ENCODE measurements at regions of chr9 and their contacts with region 1.

Region 1: DNA sequence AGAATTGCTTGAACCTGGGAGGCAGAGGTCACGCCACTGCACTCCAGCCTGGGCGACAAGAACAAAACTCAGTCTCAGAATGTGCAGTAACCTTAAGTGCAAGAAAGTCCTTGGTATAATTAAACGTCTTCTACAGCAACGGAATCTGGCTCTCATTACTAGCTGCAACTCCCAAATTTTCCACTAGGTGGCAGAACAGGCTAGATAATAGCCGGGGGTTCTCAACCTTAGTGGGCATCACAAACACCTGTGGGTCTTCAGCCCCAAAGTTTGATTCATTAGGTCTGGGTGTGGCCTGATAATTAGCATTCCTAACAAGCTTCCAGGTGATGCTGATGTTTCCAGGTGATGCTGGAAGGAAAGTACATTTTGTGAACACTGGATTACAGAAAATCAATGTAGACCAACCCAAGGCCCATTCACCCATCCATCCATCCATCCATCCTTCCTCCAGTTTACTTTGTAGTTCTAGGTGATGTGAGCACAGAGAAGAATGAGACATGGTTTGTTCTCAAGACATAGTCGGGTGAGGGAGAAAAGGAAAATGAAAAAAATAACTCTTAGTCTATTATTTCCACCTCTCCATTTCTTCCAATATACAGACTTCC is 37.3 kb downstream of the FBXW2 start:
- DNase-seq: peak; percentile 75 to 84 (median 77)
- ATAC-seq: peak; percentile 92
- H3K4me3 ChIP-seq: no peak overlapping the region
- H3K27ac ChIP-seq: no peak overlapping the region
- H3K4me1 ChIP-seq: no peaks in the 10 kb centered on the region; a peak in 1 of 5 replicates
- H3K27me3 ChIP-seq: no peaks in the 10 kb centered on the region
- CTCF ChIP-seq: peak; percentile 78 to 89 (median 85)
- EP300 ChIP-seq: no peak
- POLR2A ChIP-seq: no peak
- RAD21 ChIP-seq: peak; percentile 91 to 94

Region 2: DNA sequence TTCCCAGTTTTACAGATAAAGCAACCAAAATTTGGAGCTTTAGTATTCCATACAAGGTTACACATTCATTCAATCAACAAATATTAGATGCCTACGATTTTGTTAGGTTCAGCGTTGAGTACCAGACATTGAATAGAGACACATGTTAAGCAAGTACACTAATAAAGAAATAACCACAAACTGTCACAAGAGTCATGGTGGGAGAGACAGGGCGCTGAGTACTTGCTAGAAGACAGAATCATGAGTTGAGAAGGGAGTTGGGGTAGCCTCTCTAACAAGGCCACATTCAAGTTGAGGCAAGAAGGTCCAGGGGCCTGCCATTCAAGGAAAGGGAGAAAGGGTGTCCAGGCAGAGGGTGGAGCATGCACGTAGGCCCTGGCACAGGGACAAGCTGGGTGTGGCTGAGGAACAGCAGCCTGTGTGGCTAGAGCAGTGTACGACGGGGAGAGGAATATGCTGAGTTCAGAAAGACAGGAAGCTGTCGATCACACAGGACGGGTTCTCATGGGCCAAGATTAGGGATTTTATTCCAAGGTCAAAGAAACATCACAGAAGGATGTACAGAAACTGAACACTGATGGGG is 193.0 kb before region 1 on chr9:
- CTCF ChIA-PET with region 1: no interaction called
- POLR2A ChIA-PET with region 1: no interaction called
- in situ Hi-C with region 1: no loop called
- intact Hi-C with region 1: no loop called
- DNase-seq: peak in 3 of 4 experiments; percentile 15 to 38 (median 24)
- ATAC-seq: peak; percentile 66
- H3K4me3 ChIP-seq: no peak overlapping the region
- H3K27ac ChIP-seq: peak overlapping the region; percentile 40; the same call in 2 of the 3 replicates
- H3K4me1 ChIP-seq: peaks cover 4 to 17% of the 10 kb centered on the region in 2 experiments; a peak in 3 of 5 replicates
- H3K27me3 ChIP-seq: no peaks in the 10 kb centered on the region
- CTCF ChIP-seq: no peak
- EP300 ChIP-seq: no peak
- POLR2A ChIP-seq: no peak
- RAD21 ChIP-seq: no peak

Region 3: DNA sequence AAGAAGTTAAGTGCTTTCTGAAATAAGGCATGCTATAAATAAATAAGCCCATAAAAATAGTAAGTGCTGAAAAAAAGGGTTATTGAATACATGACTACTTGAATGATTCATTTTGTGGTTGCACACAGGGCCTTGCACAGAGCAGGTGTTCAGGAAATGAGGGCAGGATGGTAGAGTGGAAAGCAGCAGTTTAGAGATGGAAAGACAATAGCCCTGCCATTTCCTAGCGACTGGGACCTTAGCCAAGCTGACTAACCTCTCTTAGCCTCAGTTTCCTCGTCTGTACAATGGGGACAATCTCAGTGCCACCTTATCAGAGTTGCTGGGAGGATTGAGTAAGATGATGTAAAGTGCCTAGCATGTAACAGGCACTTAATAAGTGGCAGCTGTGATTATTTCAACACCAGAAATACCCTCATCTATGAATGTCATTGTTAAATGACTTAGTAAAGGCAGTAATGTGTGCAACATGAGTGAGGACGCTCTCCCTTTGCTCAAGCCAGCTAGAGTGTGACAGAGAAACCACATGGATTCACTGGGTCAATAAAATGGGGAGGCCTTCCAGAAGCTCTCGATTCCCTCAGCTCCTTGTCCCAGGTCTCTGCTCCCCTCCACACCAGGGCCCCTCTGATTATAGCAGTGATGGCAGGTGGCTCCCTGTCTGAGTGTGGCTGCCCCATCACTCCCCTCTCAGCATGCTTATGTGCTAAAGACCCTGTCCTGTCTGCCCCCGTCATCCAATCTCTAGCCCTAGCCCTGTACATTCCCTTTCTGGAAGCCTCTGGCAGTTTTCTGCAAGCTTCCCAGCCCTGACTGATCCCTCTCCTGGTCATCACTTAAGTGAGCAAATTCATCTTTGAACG is 137.0 kb after region 1 on chr9:
- CTCF ChIA-PET with region 1: no interaction called
- POLR2A ChIA-PET with region 1: no interaction called
- in situ Hi-C with region 1: no loop called
- intact Hi-C with region 1: loop called (anchors 1 kb)
- DNase-seq: peak in 3 of 4 experiments; percentile 24 to 33 (median 31)
- ATAC-seq: no peak
- H3K4me3 ChIP-seq: no peak overlapping the region
- H3K27ac ChIP-seq: peak overlapping the region; percentile 10; the same call in 1 of the 3 replicates
- H3K4me1 ChIP-seq: peaks cover 41 to 57% of the 10 kb centered on the region in 2 experiments
- H3K27me3 ChIP-seq: no peaks in the 10 kb centered on the region
- CTCF ChIP-seq: no peak
- EP300 ChIP-seq: no peak
- POLR2A ChIP-seq: no peak
- RAD21 ChIP-seq: no peak

Region 4: DNA sequence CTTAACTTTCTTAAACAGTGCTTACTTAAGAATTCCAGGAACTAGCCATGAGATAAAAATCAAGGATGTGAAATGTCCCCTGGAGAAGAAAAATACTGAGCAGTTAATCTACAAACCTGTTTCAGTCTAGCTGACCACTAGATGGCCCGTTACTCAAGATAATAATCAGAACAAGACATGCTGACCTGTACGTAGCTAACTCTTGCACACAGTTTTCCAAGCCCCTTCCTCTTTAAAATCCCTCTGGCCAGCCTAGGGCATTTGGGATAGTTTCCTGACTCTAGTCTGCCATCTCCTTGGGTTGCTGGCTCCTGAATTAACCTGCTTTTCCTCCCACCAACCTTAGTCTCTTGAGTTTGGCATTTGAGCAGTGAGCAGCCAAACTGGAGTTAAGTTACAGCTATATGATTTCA is 229.9 kb after region 1 on chr9:
- CTCF ChIA-PET with region 1: no interaction called
- POLR2A ChIA-PET with region 1: interaction called, 3 read pairs
- in situ Hi-C with region 1: no loop called
- intact Hi-C with region 1: loop called (anchors 5 kb)
- DNase-seq: peak; percentile 25 to 68 (median 28)
- ATAC-seq: peak; percentile 80
- H3K4me3 ChIP-seq: no peak overlapping the region
- H3K27ac ChIP-seq: no peak overlapping the region
- H3K4me1 ChIP-seq: peaks cover 0 to 13% of the 10 kb centered on the region in 2 experiments; a peak in 3 of 5 replicates
- H3K27me3 ChIP-seq: no peaks in the 10 kb centered on the region
- CTCF ChIP-seq: peak; percentile 41 to 79 (median 65); a peak in 5 of 6 replicates
- EP300 ChIP-seq: peak; percentile 32; the same call in 1 of the 2 replicates
- POLR2A ChIP-seq: no peak
- RAD21 ChIP-seq: peak; percentile 72 to 75

Region 5: DNA sequence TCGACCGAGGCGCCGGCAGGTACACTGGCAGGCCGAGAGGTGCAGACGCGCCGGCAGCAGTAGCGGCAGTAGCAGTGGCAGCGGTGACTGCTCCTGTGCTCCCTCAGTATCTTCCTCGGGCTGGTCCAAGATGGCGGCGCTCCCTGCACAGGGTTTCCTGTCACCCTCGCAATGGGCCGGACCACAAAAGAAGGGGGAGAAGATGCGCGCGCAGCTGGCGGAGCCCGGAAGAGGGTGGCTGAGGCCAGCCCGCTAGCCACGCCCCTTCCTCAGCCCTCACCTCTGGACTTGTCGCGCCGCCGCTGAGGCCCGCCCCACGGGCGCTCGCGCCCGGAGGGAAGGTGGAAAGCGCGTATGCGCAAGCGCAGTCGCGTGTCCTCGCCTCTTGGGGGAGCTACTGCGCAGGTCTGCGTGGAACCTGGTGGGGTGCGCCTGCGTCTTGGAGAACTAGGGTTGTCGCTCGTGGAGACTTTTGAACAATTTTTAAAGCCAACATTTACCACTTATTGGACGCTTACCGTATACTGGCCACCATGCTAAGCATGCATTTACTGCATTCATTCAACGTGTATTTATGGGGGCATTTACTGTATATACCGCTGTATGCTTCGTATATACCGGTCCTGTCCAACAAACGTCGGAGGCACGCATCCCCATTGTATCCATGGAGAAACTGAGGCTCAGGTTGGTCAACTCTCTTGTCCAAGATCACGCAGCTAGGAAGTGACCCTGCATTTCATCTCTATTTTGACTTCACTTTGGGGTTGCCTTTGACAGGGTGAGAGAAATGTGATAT is 446.0 kb after region 1 on chr9 and contains the start of gene RAB14:
- CTCF ChIA-PET with region 1: no interaction called
- POLR2A ChIA-PET with region 1: no interaction called
- in situ Hi-C with region 1: no loop called
- intact Hi-C with region 1: loop called (anchors 5 kb)
- DNase-seq: peak; percentile 99 to 100 (median 99)
- ATAC-seq: peak; percentile 88
- H3K4me3 ChIP-seq: peak within 1 kb of the TSS; percentile 87
- H3K27ac ChIP-seq: peak within 1 kb of the TSS; percentile 87
- H3K4me1 ChIP-seq: peaks cover 14 to 15% of the 10 kb centered on the region in 2 experiments; a peak in 3 of 5 replicates
- H3K27me3 ChIP-seq: no peaks in the 10 kb centered on the region
- CTCF ChIP-seq: peak; percentile 72 to 87 (median 75)
- EP300 ChIP-seq: no peak
- POLR2A ChIP-seq: peak; percentile 83
- RAD21 ChIP-seq: 0 out of 4 replicates have a peak, but pooled peaks of 1 of the 2 experiments have one; percentile 10
- polyA plus RNA-seq, gene RAB14: 20.2 to 20.9 TPM

Measured in K562 (cell line).